ENCODE measurements at regions of chr16 and their contacts with region 1.

Region 1: DNA sequence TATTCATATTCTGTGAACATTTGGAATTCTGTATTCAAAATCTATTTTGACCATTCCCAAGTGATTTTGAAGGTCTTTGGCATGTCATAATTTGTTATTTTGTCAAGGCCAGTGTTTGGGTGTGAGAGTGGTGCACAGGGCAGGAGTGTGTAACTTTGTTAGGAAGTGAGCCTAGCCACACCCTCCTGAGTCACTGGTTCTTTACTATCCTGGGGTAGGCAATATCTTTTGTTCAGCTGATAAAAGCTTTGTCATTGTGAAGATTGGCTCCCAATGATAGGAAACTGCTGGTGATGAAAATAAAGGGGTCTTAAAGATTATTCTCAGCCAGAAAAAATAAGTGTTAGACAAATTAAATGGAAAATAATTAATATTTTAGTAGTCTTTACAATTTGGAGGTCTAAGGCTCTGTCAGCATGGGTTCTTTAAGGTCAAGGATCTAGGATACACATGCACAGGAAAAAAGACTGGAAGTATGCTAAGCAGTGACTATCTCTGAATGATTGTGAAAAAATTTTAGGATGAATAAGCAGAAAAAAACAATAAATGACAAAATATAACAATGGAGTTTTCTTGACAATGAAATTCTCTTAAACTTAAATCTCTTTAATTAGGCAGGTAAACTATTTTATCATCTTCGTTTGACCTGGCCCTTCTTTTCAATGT is 5.1 kb downstream of the UBN1 start:
- DNase-seq: no peak
- ATAC-seq: no peak
- H3K4me3 ChIP-seq: no peak overlapping the region
- H3K27ac ChIP-seq: no peak overlapping the region
- H3K4me1 ChIP-seq: peaks cover 8 to 29% (median 9%) of the 10 kb centered on the region in 3 donors
- H3K27me3 ChIP-seq: no peaks in the 10 kb centered on the region
- CTCF ChIP-seq: no peak

Region 2: DNA sequence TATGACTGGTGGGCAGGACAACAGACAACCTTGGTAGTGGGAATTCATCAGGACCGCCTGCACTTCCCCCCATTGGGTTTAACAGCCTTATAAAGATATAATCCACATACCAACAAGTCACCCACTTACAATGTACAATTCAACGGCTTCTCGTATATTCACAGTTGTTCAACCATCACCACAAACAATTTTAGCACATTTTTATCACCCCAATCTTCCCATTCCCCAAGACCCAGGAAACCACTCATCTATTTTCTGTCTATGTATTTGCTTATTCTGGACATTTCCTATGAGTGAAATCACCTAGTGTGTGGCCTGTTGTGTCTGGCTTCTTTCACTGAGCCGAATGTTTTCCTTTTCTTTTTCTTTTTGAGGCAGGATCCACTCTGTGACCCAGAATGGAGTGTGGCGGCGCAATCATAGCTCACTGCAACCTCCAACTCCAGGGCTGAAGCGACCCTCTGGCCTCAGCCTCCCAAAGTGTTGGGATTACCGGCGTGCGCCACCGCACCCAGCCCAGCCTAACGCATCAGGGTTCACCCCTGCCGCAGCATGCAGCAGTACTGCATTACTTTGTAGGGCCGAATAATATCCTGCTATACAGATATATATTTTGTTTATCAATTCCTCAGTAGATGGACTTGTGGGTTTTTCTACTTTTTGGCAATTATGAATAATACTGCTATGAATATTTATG is 129.1 kb before region 1 on chr16:
- intact Hi-C with region 1: no loop called
- DNase-seq: no peak
- ATAC-seq: no peak
- H3K4me3 ChIP-seq: no peak overlapping the region
- H3K27ac ChIP-seq: no peak overlapping the region
- H3K4me1 ChIP-seq: no peaks in the 10 kb centered on the region
- H3K27me3 ChIP-seq: no peaks in the 10 kb centered on the region
- CTCF ChIP-seq: no peak

Region 3: DNA sequence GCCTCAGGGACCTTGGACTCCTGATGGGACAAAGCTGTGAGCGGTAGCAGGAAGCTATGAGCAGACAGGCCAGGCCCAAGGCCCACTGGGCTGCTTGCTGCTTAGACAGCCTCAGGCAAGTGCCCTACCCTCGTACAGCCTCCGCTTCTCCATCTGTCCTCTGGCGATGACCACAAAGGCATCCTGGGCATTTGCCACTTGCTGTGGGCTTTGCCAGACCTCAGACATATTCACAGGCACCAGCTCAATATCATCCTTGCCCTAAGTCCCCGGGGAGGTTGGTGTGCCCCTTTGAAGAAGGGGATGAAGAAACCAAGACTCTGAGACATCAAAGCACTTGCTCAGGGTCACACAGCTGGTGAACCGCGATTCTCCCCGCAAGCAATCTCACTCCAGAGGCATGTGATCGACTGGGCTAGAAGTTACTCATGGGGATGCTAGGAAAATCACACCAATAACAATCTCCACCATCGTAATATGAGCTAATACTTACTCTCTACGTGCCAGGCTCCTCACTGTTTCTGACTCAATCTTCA is 63.0 kb after region 1 on chr16:
- intact Hi-C with region 1: loop called in 1 of 3 experiments (anchors 10 kb)
- DNase-seq: no peak
- ATAC-seq: no peak
- H3K4me3 ChIP-seq: no peak overlapping the region
- H3K27ac ChIP-seq: no peak overlapping the region
- H3K4me1 ChIP-seq: no peaks in the 10 kb centered on the region
- H3K27me3 ChIP-seq: no peaks in the 10 kb centered on the region
- CTCF ChIP-seq: no peak